ENCODE measurements at regions of chr19 and their contacts with region 1.

Region 1: DNA sequence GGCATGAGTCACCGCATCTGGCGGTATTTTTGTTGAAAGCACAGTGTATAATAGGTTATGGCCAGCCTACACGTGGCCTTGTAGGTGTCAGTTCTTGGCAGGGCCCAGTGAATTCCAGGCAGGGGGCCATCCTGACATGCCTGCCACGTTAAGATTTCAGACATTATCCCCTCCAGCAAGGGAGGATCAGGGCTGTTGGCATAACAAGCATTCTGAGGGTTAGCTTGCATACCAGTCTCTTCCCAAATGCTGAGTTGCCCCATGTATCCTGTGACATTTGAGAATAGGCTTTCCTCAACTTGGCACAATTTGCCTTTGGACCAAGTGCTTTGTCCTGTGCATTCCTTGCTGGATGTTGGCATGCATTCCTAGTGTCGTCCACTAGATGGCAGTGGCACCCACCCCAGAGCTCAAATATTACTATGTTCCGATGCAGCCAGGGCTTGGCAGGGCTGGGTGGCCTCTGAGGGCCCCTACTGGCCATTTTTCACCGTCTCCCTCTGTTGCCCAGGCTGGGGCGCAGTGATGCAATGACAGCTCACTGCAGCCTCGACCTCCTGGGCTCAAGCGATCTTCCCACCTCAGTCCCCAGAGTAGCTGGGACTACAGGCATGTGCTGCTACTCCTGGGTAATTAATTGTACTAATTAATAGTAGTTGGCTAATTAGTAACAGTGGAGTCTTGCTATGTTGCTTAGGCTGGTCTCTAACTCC is 31.2 kb downstream of the NLRP12 start:
- DNase-seq: peak; percentile 86
- H3K4me3 Mint-ChIP-seq: no peak overlapping the region
- H3K27ac Mint-ChIP-seq: no peak overlapping the region
- H3K4me1 Mint-ChIP-seq: no peaks in the 10 kb centered on the region
- H3K27me3 Mint-ChIP-seq: no peaks in the 10 kb centered on the region
- CTCF ChIP-seq: peak; percentile 91

Region 2: DNA sequence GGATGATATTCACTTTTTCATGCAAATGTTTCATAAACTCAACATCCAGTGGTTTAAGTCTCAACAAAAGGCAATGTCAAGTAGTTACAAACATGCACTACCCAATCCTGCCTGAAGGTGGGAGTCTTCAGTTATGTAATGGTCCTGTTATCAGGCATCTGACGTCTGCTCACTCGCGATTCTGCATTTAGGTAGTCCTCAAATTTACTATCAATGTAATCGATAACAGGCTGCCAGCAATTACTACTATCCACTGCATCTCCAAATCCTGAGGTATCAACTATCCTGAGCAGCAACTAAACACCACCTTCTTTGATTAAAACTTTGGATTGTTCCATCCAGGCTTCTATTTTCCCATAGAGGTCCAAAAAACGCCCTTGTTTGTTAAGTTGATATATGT is 19.9 kb before region 1 on chr19:
- CTCF ChIA-PET with region 1: interaction called, 36 read pairs
- POLR2A ChIA-PET with region 1: no interaction called
- intact Hi-C with region 1: no loop called
- DNase-seq: peak; percentile 59
- H3K4me3 Mint-ChIP-seq: no peak overlapping the region
- H3K27ac Mint-ChIP-seq: no peak overlapping the region
- H3K4me1 Mint-ChIP-seq: no peaks in the 10 kb centered on the region
- H3K27me3 Mint-ChIP-seq: no peaks in the 10 kb centered on the region
- CTCF ChIP-seq: peak; percentile 36

Region 3: DNA sequence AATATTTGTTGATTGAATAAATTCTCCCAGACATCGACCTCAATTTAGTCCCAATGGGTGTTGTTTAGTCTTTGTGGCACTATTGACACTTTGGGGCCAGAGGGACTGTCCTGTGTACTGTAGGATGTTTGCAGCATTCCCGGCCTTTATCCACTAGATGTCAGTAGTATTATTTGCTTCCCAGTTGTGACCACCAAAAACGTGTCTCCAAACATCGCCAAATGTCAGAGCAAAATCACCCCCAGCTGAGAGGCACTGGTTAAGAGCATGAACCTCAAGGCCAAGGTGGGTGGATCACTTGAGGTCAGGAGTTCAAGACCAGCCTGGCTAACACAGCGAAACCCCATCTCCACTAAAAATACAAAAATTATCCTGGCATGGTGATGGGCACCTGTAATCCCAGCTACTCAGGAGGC is 15.8 kb after region 1 on chr19:
- CTCF ChIA-PET with region 1: interaction called, 42 read pairs
- POLR2A ChIA-PET with region 1: interaction called, 3 read pairs
- intact Hi-C with region 1: no loop called
- DNase-seq: peak; percentile 41
- H3K4me3 Mint-ChIP-seq: no peak overlapping the region
- H3K27ac Mint-ChIP-seq: no peak overlapping the region
- H3K4me1 Mint-ChIP-seq: no peaks in the 10 kb centered on the region
- H3K27me3 Mint-ChIP-seq: no peaks in the 10 kb centered on the region
- CTCF ChIP-seq: peak; percentile 24

Region 4: DNA sequence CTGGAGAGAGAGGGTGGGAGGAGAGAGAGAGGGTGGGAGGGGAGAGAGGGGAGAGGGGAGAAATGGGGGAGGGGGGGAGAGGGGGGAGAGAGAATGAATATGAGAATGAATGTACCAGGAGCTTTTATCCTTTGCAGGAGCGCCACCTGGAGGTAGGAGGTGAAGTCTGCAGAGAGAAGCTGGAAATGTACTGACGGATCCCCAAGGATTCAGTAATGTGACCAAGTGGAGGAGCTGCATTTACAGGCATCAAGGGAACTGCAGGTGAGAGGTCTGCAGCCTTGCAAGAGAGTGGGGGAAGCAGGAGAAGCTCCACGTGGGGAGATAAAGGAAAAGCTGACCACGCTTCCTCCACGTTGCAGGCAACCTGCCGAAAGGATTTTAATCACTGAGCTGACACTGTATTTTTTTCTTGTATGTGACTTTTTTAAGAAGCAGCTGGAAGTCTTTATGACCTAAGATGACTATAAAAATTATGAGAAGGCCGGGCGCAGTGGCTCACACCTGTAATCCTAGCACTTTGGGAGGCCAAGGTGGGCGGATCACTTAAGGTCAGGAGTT is 237.1 kb after region 1 on chr19:
- CTCF ChIA-PET with region 1: interaction called, 146 read pairs
- POLR2A ChIA-PET with region 1: no interaction called
- intact Hi-C with region 1: loop called (anchors 1 kb)
- DNase-seq: peak; percentile 82
- H3K4me3 Mint-ChIP-seq: no peak overlapping the region
- H3K27ac Mint-ChIP-seq: no peak overlapping the region
- H3K4me1 Mint-ChIP-seq: peaks cover 6% of the 10 kb centered on the region
- H3K27me3 Mint-ChIP-seq: no peaks in the 10 kb centered on the region
- CTCF ChIP-seq: peak; percentile 49

Region 5: GRCh38 chr19:54041969-54042606 is 249.2 kb after region 1 on chr19:
- CTCF ChIA-PET with region 1: interaction called, 17 read pairs
- POLR2A ChIA-PET with region 1: no interaction called
- intact Hi-C with region 1: no loop called
- DNase-seq: no peak
- H3K4me3 Mint-ChIP-seq: no peak overlapping the region
- H3K27ac Mint-ChIP-seq: no peak overlapping the region
- H3K4me1 Mint-ChIP-seq: no peaks in the 10 kb centered on the region
- H3K27me3 Mint-ChIP-seq: peaks cover 24% of the 10 kb centered on the region
- CTCF ChIP-seq: no peak

Measured in MCF 10A (cell line).